Activated T-helper 1 cell treated with anti-CD3 and anti-CD28 coated beads, Interleukin-12 subunit alpha, Interleukin-12 subunit beta, Interleukin-2, Interleukin-4 antibody, amounts not matched to agents 30 ng/mL and 10 ng/mL and 1 ng/mL, durations not matched to agents 14 hours and 24 hours and 36 hours (primary cell): ENCODE measurements at regions of chr22 and their contacts with region 1.

Region 1: GRCh38 chr22:25747245-25747944 is 5.4 kb downstream of the MYO18B start:
- DNase-seq: no peak
- H3K4me3 Mint-ChIP-seq: no peak overlapping the region
- H3K27ac Mint-ChIP-seq: peak overlapping the region; percentile 99
- H3K4me1 Mint-ChIP-seq: peaks cover 84% of the 10 kb centered on the region
- H3K27me3 Mint-ChIP-seq: no peaks in the 10 kb centered on the region

Region 2: DNA sequence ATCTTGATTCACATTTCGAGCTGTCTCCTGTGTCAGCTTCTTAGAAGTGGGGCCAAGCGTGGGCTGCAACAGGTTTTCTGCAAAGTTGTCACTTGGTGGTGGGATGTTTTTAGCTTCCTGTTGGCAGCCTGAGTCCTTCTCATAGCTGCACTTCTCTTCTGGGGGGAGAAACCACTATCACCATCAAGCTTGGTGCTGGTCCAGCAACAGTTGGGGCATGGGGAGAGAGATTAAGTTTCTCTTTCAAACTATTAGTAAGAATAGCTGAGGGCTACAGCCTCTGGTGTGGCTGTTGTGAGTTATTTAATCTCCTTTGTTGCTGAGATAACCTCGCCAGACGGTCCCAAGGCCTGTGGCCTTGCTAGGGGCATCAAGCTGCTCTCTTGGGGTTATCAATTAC is 671.1 kb before region 1 on chr22:
- intact Hi-C with region 1: loop called (anchors 5 kb)
- DNase-seq: peak; percentile 29
- H3K4me3 Mint-ChIP-seq: peak overlapping the region; percentile 61
- H3K27ac Mint-ChIP-seq: peak overlapping the region; percentile 88
- H3K4me1 Mint-ChIP-seq: peaks cover 90% of the 10 kb centered on the region
- H3K27me3 Mint-ChIP-seq: no peaks in the 10 kb centered on the region

Region 3: GRCh38 chr22:25488244-25489020 is 259.0 kb before region 1 on chr22:
- intact Hi-C with region 1: loop called (anchors 1 kb)
- DNase-seq: no peak
- H3K4me3 Mint-ChIP-seq: peak overlapping the region; percentile 28
- H3K27ac Mint-ChIP-seq: peak overlapping the region; percentile 90
- H3K4me1 Mint-ChIP-seq: peaks cover 62% of the 10 kb centered on the region
- H3K27me3 Mint-ChIP-seq: peaks cover 4% of the 10 kb centered on the region

Region 4: DNA sequence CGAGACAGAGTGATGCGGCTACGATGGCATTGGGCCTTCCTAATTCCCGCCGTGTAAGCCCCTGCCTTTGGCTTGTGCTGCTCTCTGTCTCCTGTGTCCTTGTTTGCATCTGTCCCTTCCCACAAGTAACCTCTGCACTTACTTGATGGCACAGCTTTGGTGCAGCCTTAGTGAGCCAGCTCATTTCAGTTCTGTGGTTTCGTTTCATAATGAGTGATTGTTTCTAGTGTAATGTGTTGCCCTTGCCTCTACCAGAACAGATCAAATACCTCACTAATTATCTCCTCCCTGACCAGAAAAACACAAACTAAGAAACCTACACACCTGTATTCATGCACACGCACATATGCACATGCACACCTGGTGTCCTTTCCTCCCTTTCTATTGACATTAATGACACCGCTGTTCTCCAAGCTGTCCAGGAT is 124.1 kb before region 1 on chr22:
- intact Hi-C with region 1: loop called (anchors 5 kb)
- DNase-seq: no peak
- H3K4me3 Mint-ChIP-seq: peak overlapping the region; percentile 23
- H3K27ac Mint-ChIP-seq: peak overlapping the region; percentile 54
- H3K4me1 Mint-ChIP-seq: peaks cover 63% of the 10 kb centered on the region
- H3K27me3 Mint-ChIP-seq: no peaks in the 10 kb centered on the region

Region 5: DNA sequence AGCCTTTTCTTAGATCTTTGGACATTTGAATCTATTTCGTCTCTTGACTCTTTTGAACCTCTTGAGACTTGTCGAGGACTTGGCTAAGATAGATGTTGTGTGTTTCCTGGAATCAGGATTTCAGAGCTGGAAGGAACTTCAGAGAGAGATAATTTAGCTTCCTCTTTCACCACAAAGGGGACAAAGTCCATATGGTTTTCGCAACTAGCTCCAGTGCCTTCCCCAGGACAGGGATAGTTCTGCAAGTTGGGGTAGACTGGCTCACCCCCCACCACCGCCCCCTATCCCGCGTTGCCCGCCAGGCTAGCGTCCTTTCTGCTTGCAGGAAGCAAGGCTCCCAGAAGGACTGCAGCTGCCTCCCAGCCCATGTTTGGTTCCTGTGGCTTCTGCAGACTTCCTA is 81.1 kb before region 1 on chr22:
- intact Hi-C with region 1: no loop called
- DNase-seq: no peak
- H3K4me3 Mint-ChIP-seq: no peak overlapping the region
- H3K27ac Mint-ChIP-seq: peak overlapping the region; percentile 55
- H3K4me1 Mint-ChIP-seq: peaks cover 24% of the 10 kb centered on the region
- H3K27me3 Mint-ChIP-seq: no peaks in the 10 kb centered on the region

Region 6: GRCh38 chr22:25726241-25726640 is 21.2 kb before region 1 on chr22:
- intact Hi-C with region 1: loop called (anchors 1 kb)
- DNase-seq: no peak
- H3K4me3 Mint-ChIP-seq: no peak overlapping the region
- H3K27ac Mint-ChIP-seq: peak overlapping the region; percentile 90
- H3K4me1 Mint-ChIP-seq: peaks cover 41% of the 10 kb centered on the region
- H3K27me3 Mint-ChIP-seq: no peaks in the 10 kb centered on the region

Region 7: DNA sequence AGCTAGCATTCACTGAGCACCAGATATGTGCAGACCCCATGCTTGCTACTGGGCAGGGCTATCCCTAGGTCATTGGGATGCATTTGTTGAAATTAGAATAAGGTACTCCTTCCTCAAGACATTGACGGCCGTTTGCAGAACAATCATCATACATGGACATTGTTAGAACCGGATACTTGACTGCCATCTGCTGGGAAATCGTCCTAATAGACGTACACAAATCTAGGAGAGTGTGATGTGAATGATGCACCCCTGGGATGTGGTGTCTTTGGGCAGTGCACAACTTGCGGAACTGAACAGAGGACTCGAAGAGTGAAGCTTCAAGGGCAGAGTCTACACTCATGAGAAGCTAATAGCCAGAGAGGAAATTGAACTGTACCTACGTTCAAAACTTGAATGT is 30.5 kb after region 1 on chr22:
- intact Hi-C with region 1: loop called (anchors 1 kb)
- DNase-seq: peak; percentile 8
- H3K4me3 Mint-ChIP-seq: no peak overlapping the region
- H3K27ac Mint-ChIP-seq: no peak overlapping the region
- H3K4me1 Mint-ChIP-seq: peaks cover 4% of the 10 kb centered on the region
- H3K27me3 Mint-ChIP-seq: no peaks in the 10 kb centered on the region